ENCODE measurements at regions of chr18 and their contacts with region 1.

Region 1: DNA sequence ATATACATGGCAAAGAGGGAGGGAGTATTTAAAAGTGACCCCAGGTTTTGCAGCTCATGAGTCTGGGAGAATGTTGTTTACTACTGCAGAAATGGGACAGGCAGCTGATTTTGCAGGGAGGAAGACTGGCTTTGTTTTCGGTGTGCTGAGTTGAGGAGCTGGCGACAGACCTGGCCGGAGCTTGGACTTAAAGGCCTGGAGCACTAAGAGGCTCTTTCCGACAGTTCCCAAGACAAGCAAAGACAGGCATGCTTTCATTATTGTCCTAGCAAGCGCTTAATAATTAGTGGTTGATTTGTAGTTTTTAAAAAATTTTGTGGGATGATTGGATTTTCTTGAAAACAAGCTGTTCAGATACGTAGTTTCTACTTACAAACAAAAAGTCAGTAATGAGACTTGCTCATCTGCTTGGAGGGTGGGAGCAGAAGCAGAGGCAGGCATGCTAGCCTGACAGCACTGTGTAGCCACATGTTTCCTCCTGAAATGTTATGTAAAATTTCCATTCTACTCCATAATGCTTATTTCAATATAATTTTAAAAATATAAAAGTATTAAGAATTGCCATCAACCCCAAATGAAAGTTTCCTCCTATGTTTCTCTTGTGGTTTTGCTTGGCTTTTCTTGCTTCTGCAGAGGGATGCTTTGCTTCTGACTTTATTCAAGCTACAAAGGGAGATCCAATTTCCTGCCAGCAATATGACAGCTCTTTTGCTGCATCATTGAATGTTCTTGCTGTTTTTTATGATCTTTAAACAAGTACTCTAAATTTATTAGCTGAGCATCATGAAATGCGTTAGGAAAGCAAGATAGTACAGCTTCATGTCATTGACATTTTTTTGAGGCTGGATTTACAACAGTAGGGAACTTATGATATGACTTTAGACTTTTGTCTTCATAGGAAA is 75.8 kb downstream of the PHLPP1 start:
- DNase-seq: no peak
- ATAC-seq: no peak
- H3K4me3 ChIP-seq: no peak overlapping the region
- H3K27ac ChIP-seq: peak overlapping the region in 1 of 4 donors; percentile 23
- H3K4me1 ChIP-seq: peaks cover 19% of the 10 kb centered on the region
- H3K27me3 ChIP-seq: no peaks in the 10 kb centered on the region
- CTCF ChIP-seq: no peak
- POLR2A ChIP-seq: no peak

Region 2: GRCh38 chr18:62729487-62730386 is 61.4 kb before region 1 on chr18:
- intact Hi-C with region 1: loop called (anchors 10 kb)
- DNase-seq: no peak
- ATAC-seq: no peak
- H3K4me3 ChIP-seq: no peak overlapping the region
- H3K27ac ChIP-seq: no peak overlapping the region
- H3K4me1 ChIP-seq: peaks cover under 1% of the 10 kb centered on the region
- H3K27me3 ChIP-seq: no peaks in the 10 kb centered on the region
- CTCF ChIP-seq: no peak
- POLR2A ChIP-seq: no peak